ENCODE measurements at regions of chr1 and their contacts with region 1.

Region 1: DNA sequence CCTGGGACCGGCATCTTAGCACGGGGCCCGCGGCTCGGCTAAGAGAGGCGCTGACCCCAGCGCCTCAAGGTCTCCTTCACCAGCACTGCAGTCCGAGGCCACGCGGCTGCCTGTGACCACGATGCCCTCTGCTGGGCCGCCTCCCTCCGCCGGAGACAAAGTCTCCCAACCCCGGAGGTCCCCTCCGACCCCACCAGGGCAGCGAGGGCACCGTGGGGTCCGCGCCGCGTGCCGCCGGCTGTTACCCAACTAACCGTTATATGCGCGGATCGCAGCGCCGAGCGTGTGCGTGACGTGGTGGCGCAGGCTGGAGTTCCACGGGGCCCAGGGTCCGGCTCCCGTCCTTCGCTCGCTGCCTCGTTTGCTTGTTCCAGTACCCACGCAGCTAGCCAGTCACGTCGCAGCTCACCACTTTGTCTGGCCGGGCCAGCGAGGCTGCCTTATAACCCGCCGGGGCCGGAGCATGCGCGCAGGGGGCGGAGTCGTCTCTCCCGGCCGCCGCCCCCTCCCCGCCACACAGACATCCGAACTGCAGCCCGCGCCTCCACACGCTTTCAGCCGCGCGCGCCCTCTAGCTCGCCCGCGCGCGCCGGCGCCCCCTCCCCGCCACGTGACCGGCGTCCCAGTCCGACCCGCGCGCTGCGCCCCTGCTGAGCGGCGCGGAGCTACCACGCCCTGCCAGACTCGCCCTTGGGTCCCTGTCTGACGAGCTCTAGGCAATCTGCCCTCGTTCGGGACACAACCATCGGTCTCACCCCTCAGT is at the start of gene SLC16A1:
- DNase-seq: peak; percentile 95 to 97 (median 95)
- ATAC-seq: peak; percentile 84 to 96 (median 93)
- H3K4me3 ChIP-seq: peak within 1 kb of the TSS; percentile 51 to 92 (median 71)
- H3K27ac ChIP-seq: peak within 1 kb of the TSS; percentile 76 to 97 (median 94)
- H3K4me1 ChIP-seq: peaks cover 0 to 62% (median 30%) of the 10 kb centered on the region in 12 donors
- H3K27me3 ChIP-seq: no peaks in the 10 kb centered on the region
- CTCF ChIP-seq: peak in 9 of 12 donors; percentile 4 to 53 (median 39)
- POLR2A ChIP-seq: peak; percentile 72 to 98
- total RNA-seq, gene SLC16A1: 116 to 192 (median 133) TPM

Region 2: DNA sequence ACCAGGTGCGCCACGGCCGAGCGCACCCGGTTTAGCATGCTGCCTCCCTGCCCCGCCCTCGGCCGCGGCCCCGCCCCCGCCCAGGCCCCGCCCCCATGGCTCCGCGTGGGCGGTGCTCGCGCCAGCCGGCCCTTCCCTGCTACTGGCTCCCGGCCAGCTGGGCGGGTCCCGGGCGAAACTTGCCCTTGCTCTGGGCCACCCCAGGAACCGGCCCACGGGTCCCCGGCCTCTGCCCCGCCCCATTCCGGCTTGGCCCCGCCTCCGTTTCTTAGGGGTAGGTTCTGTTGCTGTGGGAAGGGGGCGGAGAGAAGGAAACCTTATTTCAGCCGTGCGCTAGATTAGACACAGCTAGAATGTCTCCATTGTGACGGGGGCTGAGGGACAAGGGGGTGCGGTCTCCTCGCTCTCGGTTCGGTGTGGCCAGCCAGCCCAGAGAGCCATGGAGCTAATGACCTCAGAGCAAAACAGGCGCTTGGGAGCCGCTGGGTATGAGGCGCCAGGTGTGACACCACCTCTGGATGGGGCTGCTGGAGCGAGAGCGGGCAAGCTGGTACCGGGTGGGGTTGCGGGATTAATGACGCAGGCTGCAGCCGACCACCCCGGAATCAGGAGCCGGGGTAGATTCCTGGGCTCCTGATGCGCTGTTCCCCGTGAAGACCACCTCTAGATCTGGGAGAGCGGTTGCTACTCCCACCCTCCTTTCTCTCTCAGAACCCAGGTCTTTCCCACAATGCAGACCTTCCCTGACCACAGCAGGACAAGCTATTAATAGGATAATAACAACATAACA is 240.5 kb before region 1 on chr1 and contains the start of gene PPM1J:
- intact Hi-C with region 1: loop called in 4 of 10 experiments (anchors 2 to 5 kb)
- DNase-seq: peak; percentile 98 to 99 (median 99)
- ATAC-seq: peak; percentile 86 to 93 (median 88)
- H3K4me3 ChIP-seq: peak within 1 kb of the TSS; percentile 40 to 93 (median 70)
- H3K27ac ChIP-seq: peak within 1 kb of the TSS in 11 of 12 donors; percentile 31 to 83 (median 71)
- H3K4me1 ChIP-seq: peaks cover 0 to 35% (median 20%) of the 10 kb centered on the region in 12 donors
- H3K27me3 ChIP-seq: peaks cover 0 to 12% (median 0%) of the 10 kb centered on the region in 9 donors
- CTCF ChIP-seq: no peak
- POLR2A ChIP-seq: peak in 1 of 2 donors; percentile 81
- total RNA-seq, gene PPM1J: 4.2 to 11.5 (median 8.3) TPM

Region 3: DNA sequence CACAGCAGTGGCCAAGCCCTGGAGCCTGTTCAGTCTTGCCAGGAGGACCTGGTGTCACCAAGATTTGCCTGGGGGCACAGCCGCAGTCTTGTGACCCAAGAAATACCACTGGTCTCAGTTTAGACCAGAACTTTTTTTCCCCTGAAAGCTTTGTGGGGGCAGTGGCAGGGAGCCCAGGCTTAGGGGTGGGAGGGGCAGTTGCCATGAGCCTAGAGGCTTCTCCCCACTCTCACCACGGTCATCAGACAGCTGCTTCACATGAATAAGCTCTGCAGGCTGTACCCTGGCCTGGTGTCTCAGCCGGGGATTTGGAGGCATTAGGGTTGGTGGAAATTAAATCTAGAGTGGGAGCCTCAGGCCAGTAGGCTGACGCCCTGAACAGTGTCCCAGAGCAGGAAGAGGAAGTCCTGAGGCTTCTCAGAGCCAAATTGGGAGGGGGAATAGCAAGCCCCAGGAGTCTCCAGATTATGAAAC is 73.7 kb before region 1 on chr1:
- intact Hi-C with region 1: loop called in 9 of 10 experiments (anchors 1 to 5 kb)
- DNase-seq: peak in 3 of 5 donors; percentile 24 to 36 (median 26)
- ATAC-seq: peak; percentile 39 to 59 (median 46)
- H3K4me3 ChIP-seq: no peak overlapping the region
- H3K27ac ChIP-seq: peak overlapping the region in 9 of 12 donors; percentile 41 to 79 (median 59)
- H3K4me1 ChIP-seq: peaks cover 0 to 18% (median 11%) of the 10 kb centered on the region in 12 donors
- H3K27me3 ChIP-seq: no peaks in the 10 kb centered on the region
- CTCF ChIP-seq: no peak
- POLR2A ChIP-seq: no peak

Region 4: GRCh38 chr1:112911506-112911905 is 44.5 kb before region 1 on chr1:
- intact Hi-C with region 1: loop called in 2 of 10 experiments (anchors 5 to 10 kb)
- DNase-seq: no peak
- ATAC-seq: no peak
- H3K4me3 ChIP-seq: no peak overlapping the region
- H3K27ac ChIP-seq: no peak overlapping the region
- H3K4me1 ChIP-seq: peaks cover 0 to 18% (median 5%) of the 10 kb centered on the region in 12 donors
- H3K27me3 ChIP-seq: no peaks in the 10 kb centered on the region
- CTCF ChIP-seq: no peak
- POLR2A ChIP-seq: no peak

Region 5: GRCh38 chr1:112998592-112999235 is 42.8 kb after region 1 on chr1:
- intact Hi-C with region 1: loop called in 7 of 10 experiments (anchors 2 to 5 kb)
- DNase-seq: peak; percentile 40 to 84 (median 67)
- ATAC-seq: peak; percentile 82 to 87 (median 85)
- H3K4me3 ChIP-seq: no peak overlapping the region
- H3K27ac ChIP-seq: peak overlapping the region; percentile 16 to 94 (median 82)
- H3K4me1 ChIP-seq: peaks cover 0 to 42% (median 10%) of the 10 kb centered on the region in 12 donors
- H3K27me3 ChIP-seq: no peaks in the 10 kb centered on the region
- CTCF ChIP-seq: no peak
- POLR2A ChIP-seq: no peak

Region 6: DNA sequence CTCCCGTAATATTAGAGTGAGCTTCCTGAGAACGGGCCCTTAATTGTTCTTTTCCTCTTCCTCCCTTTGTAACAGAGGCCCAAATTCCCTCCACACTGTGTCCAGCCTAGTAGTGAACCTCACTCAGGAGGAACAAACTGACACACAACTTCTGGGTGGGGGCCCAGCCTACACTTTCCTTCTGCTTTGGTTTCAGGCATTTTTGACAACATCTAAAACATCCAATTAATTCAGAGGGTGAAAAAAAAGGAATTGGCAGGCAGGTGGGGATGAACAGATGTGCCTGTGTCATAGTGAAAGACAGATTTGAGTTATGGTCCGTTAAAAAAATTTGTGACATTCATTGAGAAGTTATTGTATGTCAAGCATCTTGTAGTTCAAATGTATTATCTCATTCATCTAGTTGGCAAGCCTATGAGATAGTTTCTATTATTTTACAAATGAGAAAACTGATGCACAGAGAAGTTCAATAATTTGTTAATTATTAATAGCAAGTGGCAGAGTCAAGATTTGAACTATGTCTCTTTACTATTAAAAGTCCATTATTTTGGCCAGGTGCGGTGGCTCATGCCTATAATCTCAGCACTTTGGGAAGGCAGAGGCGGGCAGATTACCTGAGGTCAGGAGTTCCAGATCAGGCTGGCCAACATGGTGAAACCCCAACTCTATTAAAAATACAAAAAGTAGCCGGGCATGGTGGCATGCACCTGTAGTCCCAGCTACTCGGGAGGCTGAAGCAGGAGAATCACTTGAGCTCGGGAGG is 75.4 kb after region 1 on chr1:
- intact Hi-C with region 1: loop called in 3 of 10 experiments (anchors 5 to 10 kb)
- DNase-seq: no peak
- ATAC-seq: no peak
- H3K4me3 ChIP-seq: no peak overlapping the region
- H3K27ac ChIP-seq: peak overlapping the region in 1 of 12 donors; percentile 83
- H3K4me1 ChIP-seq: peaks cover 0 to 23% (median 2%) of the 10 kb centered on the region in 12 donors
- H3K27me3 ChIP-seq: no peaks in the 10 kb centered on the region
- CTCF ChIP-seq: no peak
- POLR2A ChIP-seq: no peak